Activated naive CD4-positive, alpha-beta T cell treated with anti-CD3 and anti-CD28 coated beads for 36 hours (primary cell): ENCODE measurements at regions of chr11 and their contacts with region 1.

Region 1: DNA sequence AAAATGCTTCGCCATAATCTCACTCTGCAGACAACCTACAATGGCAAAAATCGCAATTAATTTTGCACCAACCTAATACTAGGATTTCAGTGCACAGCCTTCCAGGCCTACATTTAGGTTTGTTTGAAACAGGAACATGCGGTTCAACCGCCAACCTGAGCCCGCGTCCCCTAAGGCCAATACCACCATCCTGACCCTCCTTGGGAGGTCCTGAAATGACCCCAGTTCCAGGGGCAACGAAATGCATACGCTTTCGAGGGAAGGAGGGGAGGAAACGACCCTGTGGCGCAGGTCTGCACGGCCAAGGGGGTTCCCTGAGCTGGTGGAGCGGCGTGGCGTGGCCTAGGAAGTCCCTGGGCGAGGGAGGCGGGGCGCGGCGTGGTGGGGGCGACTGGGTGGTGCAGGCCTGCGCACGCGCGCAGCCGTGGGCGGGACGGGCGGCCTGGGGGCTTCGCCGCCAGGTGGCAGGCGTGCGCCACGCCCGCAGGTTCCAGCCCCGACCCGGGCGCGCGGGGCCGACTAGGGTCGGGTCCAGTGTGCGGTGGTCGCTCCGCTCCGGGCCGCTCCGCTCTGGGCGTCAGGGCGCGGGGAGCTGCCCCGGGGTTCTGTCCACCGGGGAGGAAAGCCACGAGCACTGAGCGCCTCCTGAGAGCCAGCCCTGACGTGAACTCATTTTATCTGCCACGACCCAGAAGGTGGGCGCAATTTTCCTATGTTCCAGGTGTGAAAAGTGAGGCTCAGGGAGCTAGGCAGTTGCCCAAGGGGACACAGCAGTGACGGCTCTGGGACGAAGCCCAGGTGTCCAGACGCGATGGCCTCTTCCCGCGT is 94.1 kb downstream of the SWAP70 start:
- DNase-seq: peak; percentile 94
- H3K4me3 Mint-ChIP-seq: peak overlapping the region; percentile 73
- H3K27ac Mint-ChIP-seq: peak overlapping the region; percentile 81
- H3K4me1 Mint-ChIP-seq: peaks cover 42% of the 10 kb centered on the region
- H3K27me3 Mint-ChIP-seq: no peaks in the 10 kb centered on the region

Region 2: GRCh38 chr11:8911029-8911826 is 846.8 kb before region 1 on chr11 and contains the start of gene AKIP1:
- CTCF ChIA-PET with region 1: no interaction called
- intact Hi-C with region 1: loop called (anchors 5 kb)
- DNase-seq: peak; percentile 91
- H3K4me3 Mint-ChIP-seq: peak within 1 kb of the TSS; percentile 92
- H3K27ac Mint-ChIP-seq: peak within 1 kb of the TSS; percentile 86
- H3K4me1 Mint-ChIP-seq: peaks cover 44% of the 10 kb centered on the region
- H3K27me3 Mint-ChIP-seq: no peaks in the 10 kb centered on the region
- total RNA-seq, gene AKIP1: 41.5 to 43.9 TPM

Region 3: DNA sequence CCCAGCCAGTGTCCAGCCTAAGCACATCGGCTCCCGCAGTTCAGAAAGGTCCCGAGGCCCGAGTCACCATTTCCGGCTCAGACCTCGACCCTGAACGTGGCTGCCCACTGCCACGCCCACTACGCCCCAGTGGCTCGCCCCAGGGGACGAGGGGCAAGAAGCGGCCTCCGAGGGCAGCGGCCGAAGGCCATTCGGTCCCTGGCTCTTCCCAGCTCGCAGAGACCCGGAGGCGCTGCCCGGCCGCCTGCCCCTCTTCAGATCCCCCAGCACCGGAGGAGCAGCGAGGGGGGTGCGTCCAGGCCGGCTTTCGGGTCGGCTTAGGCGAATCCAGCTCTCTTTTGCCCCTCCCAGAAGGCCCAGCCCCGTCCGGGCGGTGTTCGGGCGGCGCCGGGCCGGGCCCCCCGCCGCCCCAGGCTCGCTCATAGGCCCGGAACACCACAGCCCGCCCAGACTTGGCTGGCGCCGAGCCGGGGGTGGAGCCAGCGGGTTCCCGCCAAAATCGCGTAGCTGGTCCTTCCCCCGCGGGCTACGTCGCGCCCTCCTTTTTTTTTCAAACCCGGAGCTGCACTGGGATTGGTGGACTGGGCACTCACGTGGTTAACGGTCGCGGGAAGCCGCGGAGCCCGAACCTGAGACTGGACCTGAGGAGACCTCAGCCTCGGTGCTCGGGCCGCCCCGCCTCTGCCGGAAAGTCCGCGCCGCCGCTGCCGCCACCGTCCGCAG is 184.8 kb before region 1 on chr11 and contains the start of gene WEE1:
- CTCF ChIA-PET with region 1: interaction called, 4 read pairs
- intact Hi-C with region 1: loop called (anchors 2 kb)
- DNase-seq: peak; percentile 99
- H3K4me3 Mint-ChIP-seq: peak within 1 kb of the TSS; percentile 93
- H3K27ac Mint-ChIP-seq: peak within 1 kb of the TSS; percentile 77
- H3K4me1 Mint-ChIP-seq: peaks cover 27% of the 10 kb centered on the region
- H3K27me3 Mint-ChIP-seq: peaks cover 10% of the 10 kb centered on the region
- total RNA-seq, gene WEE1: 41.8 to 46.6 TPM

Region 4: DNA sequence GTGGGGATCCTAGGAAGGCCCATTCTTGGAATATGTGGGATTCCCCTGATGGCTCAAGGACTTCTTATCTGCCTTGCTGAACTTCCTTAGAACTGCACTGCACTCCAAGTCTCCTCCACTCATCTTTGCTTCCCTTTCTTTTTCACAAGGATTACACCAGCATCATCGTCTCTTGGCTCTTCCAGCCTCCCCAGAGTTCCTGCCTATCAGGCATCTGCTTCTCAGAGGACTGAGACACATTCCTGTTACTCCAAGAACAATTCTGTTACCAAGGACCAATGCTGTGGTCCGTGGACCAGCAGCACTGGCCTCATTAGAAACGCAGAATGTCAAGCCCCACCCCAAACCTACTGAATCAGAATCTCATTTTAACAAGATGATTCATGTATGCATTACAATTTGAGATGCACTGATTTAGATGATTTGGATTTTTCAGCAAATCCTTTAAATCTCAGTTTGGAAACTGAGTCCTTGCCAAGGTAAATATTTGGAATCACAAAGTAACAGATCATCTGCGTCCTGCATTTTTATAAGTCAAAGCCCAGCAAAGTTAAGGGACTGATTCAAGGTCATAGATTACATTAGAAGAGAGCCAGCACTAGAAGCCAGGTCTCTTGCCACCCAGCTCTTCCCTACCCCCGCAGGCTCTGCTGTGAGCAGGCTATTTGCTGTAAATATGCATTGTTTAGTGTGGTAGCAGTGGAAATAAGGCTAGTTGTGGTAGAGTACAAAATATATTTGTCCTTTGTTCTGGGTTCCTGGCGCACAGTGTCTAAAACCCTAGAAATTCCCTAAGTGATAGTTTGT is 16.8 kb after region 1 on chr11:
- CTCF ChIA-PET with region 1: no interaction called
- intact Hi-C with region 1: no loop called
- DNase-seq: no peak
- H3K4me3 Mint-ChIP-seq: no peak overlapping the region
- H3K27ac Mint-ChIP-seq: no peak overlapping the region
- H3K4me1 Mint-ChIP-seq: no peaks in the 10 kb centered on the region
- H3K27me3 Mint-ChIP-seq: no peaks in the 10 kb centered on the region

Region 5: GRCh38 chr11:9861860-9862725 is 104.1 kb after region 1 on chr11:
- CTCF ChIA-PET with region 1: interaction called, 7 read pairs
- intact Hi-C with region 1: loop called (anchors 1 kb)
- DNase-seq: peak; percentile 71
- H3K4me3 Mint-ChIP-seq: no peak overlapping the region
- H3K27ac Mint-ChIP-seq: no peak overlapping the region
- H3K4me1 Mint-ChIP-seq: peaks cover 30% of the 10 kb centered on the region
- H3K27me3 Mint-ChIP-seq: no peaks in the 10 kb centered on the region

Region 6: DNA sequence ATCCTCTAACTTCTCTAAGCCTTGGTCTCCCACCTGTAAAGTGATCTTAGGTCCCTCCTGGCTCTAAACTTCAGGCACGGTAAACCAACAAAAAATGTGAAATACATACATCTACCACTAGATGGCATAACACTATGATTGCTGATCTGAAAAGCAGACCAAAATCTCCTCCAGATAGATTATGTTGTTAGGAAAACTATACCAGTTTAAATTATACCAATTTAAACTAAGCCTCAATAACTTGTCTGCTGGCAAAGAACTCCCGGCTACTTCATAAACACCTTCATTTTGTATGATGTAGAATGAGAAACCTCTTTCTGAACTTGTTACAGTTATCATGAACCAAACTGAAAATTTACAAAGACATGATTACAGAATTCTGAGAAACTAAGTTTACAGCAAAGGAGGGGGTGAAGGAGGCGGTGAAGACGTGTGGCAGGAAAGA is 450.1 kb after region 1 on chr11:
- CTCF ChIA-PET with region 1: interaction called, 3 read pairs
- intact Hi-C with region 1: loop called (anchors 1 kb)
- DNase-seq: no peak
- H3K4me3 Mint-ChIP-seq: no peak overlapping the region
- H3K27ac Mint-ChIP-seq: no peak overlapping the region
- H3K4me1 Mint-ChIP-seq: no peaks in the 10 kb centered on the region
- H3K27me3 Mint-ChIP-seq: no peaks in the 10 kb centered on the region

Region 7: GRCh38 chr11:10366568-10367370 is 608.7 kb after region 1 on chr11:
- CTCF ChIA-PET with region 1: interaction called, 9 read pairs
- intact Hi-C with region 1: loop called (anchors 1 kb)
- DNase-seq: peak; percentile 87
- H3K4me3 Mint-ChIP-seq: peak overlapping the region; percentile 7
- H3K27ac Mint-ChIP-seq: no peak overlapping the region
- H3K4me1 Mint-ChIP-seq: peaks cover 6% of the 10 kb centered on the region
- H3K27me3 Mint-ChIP-seq: peaks cover 9% of the 10 kb centered on the region